ENCODE measurements at regions of chr17 and their contacts with region 1.

Region 1: DNA sequence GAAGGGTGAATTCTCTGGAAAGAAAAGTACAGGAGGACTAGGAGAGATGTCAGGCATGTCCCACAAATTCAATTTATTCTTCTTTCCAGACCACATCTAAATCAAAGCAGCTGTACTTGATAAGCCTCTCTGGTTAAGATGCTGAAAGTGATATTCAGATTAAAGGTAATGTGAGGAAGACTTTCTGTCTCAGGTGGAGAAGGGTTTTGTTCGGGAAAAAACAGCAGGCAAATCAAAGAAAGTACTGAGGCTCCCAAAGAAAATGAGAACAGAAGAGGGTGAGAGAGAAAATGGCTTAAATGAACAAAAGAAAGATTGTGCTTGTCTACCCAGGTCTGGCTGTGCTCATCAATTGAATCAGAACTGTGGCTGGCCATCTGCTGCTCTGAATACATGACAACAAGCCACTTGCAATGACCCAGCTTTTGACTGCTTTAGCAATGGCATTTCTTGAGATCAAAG is 55.6 kb downstream of the MMD start:
- DNase-seq: no peak
- ATAC-seq: no peak
- H3K4me3 ChIP-seq: no peak overlapping the region
- H3K27ac ChIP-seq: no peak overlapping the region
- H3K4me1 ChIP-seq: no peaks in the 10 kb centered on the region
- H3K27me3 ChIP-seq: no peaks in the 10 kb centered on the region
- CTCF ChIP-seq: no peak
- POLR2A ChIP-seq: no peak

Region 2: DNA sequence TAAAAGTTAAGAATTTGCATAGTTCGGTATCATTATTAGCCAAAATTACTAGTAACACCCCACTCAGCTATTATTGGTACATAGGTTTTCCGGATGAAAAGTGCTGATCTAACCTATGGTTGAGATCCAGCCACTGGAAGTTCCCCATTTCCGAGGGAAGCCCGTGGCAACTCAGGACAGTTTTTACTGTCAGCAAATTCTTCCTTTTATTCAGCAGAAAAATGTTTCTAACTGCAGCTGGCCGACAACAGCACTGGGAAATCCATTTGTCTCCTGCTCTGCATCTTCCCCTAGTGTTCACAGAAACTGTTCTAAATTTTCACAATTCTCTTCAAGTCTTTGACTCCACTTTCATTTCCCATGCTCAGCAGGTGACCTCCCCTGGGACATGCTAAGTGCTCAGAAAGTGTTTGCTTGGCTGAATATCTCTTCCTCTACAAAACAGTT is 71.1 kb after region 1 on chr17:
- intact Hi-C with region 1: no loop called
- DNase-seq: peak in 1 of 4 donors; percentile 32
- ATAC-seq: no peak
- H3K4me3 ChIP-seq: no peak overlapping the region
- H3K27ac ChIP-seq: no peak overlapping the region
- H3K4me1 ChIP-seq: peaks cover 20% of the 10 kb centered on the region
- H3K27me3 ChIP-seq: no peaks in the 10 kb centered on the region
- CTCF ChIP-seq: no peak
- POLR2A ChIP-seq: no peak

Region 3: GRCh38 chr17:55513885-55514591 is 148.0 kb after region 1 on chr17:
- intact Hi-C with region 1: loop called (anchors 10 kb)
- DNase-seq: peak; percentile 65 to 76 (median 71)
- ATAC-seq: peak; percentile 62
- H3K4me3 ChIP-seq: no peak overlapping the region
- H3K27ac ChIP-seq: no peak overlapping the region
- H3K4me1 ChIP-seq: peaks cover 6% of the 10 kb centered on the region
- H3K27me3 ChIP-seq: peaks cover 0 to 3% of the 10 kb centered on the region in 2 donors
- CTCF ChIP-seq: peak; percentile 77 to 99 (median 83)
- POLR2A ChIP-seq: no peak